ENCODE measurements at regions of chr12 and their contacts with region 1.

Region 1: DNA sequence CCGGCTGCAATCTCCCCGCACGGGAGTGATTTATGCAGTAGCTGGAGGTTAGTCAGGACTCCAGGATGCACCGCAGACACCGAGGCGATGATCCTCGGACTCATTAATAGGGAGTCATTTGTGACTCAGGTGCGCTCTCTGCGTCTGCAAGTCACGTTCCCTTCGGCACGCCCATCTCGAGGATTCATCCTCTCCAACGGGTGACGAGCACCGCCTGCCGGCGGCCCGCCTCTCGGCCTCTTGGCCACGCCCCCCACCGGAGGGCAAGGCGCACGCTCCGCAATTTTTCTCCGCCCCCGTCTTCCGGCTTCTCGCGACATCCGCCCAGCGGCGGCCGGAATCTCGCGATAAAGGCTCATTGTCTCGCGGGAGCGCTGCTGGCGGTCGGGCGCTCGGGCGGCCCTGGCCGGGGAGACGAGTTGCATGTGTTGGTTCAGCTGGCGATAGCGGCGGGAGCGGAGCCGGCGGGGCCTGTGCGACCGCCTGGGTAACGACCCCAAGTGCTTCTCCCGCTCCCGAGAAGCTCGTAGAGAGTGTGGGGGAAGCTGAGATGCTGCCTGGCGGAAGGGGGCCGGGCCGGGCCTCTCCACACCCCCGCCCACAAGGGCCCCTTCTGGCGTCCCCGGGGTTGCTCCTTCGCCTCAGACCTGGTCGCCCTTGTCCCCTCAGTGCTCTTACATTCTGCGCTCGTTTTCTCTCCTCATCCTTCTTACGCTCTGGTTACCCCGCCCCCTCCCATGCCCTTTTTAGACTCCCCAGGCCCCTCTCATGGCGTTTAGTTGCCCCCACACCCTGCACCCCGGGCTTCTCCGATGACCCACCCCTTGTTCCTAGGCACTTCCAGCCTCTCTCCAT is at the start of gene DENR:
- DNase-seq: peak; percentile 100
- H3K4me3 Mint-ChIP-seq: peak within 1 kb of the TSS; percentile 98
- H3K27ac Mint-ChIP-seq: peak within 1 kb of the TSS; percentile 99
- H3K4me1 Mint-ChIP-seq: peaks cover 63% of the 10 kb centered on the region
- H3K27me3 Mint-ChIP-seq: no peaks in the 10 kb centered on the region
- CTCF ChIP-seq: peak; percentile 76
- total RNA-seq, gene DENR: 83.2 and 85.8 TPM in 2 replicates

Region 2: DNA sequence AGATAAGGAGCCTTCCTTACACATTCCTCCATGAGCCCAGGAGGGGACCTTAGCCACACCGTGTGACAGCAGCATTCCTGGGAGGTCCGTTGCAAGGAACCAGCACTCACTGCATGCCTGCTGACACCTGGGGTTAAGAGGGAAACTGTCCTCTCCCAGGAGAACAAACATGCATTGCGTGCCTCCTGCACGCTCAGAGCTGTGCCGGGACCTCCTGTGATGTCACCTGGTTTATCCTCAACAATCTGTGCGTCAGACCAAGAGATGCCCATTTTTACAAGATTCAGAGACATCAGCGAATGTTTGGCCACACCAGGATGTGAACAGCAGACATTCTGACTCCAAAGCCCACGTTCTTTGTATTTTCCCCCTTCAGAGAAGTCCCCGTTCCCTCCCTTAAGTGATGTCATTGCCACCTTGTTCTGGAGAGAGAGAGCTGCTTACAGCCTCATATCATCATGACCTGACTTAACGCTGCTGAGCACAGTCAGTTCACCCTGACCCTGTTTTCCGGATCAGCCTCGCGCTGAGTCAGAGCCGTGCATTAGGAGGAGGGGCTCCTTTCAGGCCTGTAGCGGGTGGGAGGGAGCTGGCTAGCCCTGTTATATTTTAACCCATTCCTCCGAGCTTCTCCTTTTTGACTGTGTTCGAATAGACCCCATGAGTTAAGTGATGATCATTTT is 1004.0 kb before region 1 on chr12:
- CTCF ChIA-PET with region 1: no interaction called
- intact Hi-C with region 1: no loop called
- DNase-seq: peak; percentile 50
- H3K4me3 Mint-ChIP-seq: no peak overlapping the region
- H3K27ac Mint-ChIP-seq: peak overlapping the region; percentile 51
- H3K4me1 Mint-ChIP-seq: peaks cover 12% of the 10 kb centered on the region
- H3K27me3 Mint-ChIP-seq: no peaks in the 10 kb centered on the region
- CTCF ChIP-seq: no peak

Region 3: GRCh38 chr12:122642009-122642408 is 110.7 kb before region 1 on chr12:
- CTCF ChIA-PET with region 1: interaction called, 21 read pairs
- intact Hi-C with region 1: loop called (anchors 1 kb)
- DNase-seq: no peak
- H3K4me3 Mint-ChIP-seq: no peak overlapping the region
- H3K27ac Mint-ChIP-seq: no peak overlapping the region
- H3K4me1 Mint-ChIP-seq: peaks cover 5% of the 10 kb centered on the region
- H3K27me3 Mint-ChIP-seq: no peaks in the 10 kb centered on the region
- CTCF ChIP-seq: no peak

Region 4: DNA sequence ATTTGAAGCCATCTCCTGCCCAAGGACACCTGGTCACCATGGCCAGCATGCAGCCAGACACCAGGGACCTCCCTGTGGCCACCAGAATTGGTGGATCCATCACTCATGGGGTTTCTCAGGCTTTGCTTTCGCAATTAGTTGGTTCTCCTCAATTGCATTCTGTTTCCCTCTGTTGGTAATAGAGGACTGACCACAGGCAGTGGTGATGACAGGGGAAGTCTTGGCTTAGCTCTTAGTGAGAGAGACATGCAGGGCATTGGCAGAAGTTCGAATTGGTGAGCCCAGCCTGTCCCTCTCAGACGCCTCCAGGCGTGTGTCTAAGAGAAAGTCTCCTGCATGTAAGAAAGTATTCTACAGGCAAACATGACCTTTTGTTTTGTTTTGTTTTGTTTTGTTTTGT is 70.9 kb before region 1 on chr12:
- CTCF ChIA-PET with region 1: interaction called, 6 read pairs
- intact Hi-C with region 1: loop called (anchors 1 kb)
- DNase-seq: no peak
- H3K4me3 Mint-ChIP-seq: no peak overlapping the region
- H3K27ac Mint-ChIP-seq: no peak overlapping the region
- H3K4me1 Mint-ChIP-seq: peaks cover 12% of the 10 kb centered on the region
- H3K27me3 Mint-ChIP-seq: no peaks in the 10 kb centered on the region
- CTCF ChIP-seq: no peak

Measured in Calu3 (cell line).